ENCODE measurements at regions of chr2 and their contacts with region 1.

Region 1: GRCh38 chr2:20642055-20642971 is 8.6 kb downstream of the HS1BP3 start:
- DNase-seq: peak; percentile 50 to 91
- H3K4me3 ChIP-seq: no peak overlapping the region
- H3K27ac ChIP-seq: no peak overlapping the region
- H3K4me1 ChIP-seq: no peaks in the 10 kb centered on the region
- H3K27me3 ChIP-seq: no peaks in the 10 kb centered on the region
- CTCF ChIP-seq: peak in 2 of 3 experiments; percentile 95; a peak in 3 of 4 replicates
- EP300 ChIP-seq: no peak
- POLR2A ChIP-seq: no peak
- RAD21 ChIP-seq: peak; percentile 93 to 95

Region 2: GRCh38 chr2:20398956-20399567 is 243.3 kb before region 1 on chr2:
- CTCF ChIA-PET with region 1: interaction called, 14 read pairs
- POLR2A ChIA-PET with region 1: no interaction called
- DNase-seq: no peak
- H3K4me3 ChIP-seq: no peak overlapping the region
- H3K27ac ChIP-seq: no peak overlapping the region
- H3K4me1 ChIP-seq: no peaks in the 10 kb centered on the region
- H3K27me3 ChIP-seq: no peaks in the 10 kb centered on the region
- CTCF ChIP-seq: no peak
- EP300 ChIP-seq: no peak
- POLR2A ChIP-seq: no peak
- RAD21 ChIP-seq: no peak

Region 3: DNA sequence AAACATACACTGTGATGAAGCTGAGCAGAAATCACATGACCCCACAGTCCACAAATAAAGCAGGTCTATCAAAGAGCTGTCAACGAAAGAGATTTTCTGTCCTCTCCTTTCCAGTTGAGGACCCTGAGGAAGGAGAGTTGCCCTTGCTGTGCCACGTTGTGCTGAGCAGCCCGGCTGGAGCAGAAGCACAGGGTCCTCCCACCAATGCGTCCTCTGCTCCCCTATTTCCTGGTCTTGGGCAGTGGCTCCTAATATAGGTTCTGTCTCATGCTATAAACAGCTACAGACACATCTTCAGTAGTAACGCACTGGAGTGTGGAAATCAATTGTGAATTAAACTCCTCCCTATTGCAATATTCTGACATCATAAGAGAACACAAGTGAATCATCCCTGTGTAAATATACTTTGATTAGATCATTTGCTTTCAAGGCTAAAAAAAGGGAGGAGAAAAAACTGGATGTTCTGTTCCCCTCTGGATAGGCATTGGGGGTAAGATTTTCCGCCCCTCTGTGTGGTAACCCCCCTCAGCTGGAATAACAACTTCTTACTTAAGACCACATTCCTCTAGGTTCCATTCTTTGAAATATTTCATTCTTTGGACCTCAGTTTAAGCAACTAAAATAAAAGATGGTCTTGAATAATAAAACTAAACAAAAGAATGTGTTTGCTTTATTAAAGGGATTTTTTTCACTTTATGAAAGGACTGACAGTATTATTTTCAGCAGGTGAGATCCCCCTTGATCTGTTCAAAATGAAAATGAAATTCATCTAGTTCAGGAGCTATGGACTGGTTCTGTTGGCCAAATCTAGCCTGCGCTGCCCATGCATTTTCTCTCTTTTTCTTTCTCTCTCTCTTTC is 203.8 kb before region 1 on chr2:
- CTCF ChIA-PET with region 1: interaction called, 367 read pairs
- POLR2A ChIA-PET with region 1: interaction called, 4 read pairs
- DNase-seq: no peak
- H3K4me3 ChIP-seq: no peak overlapping the region
- H3K27ac ChIP-seq: no peak overlapping the region
- H3K4me1 ChIP-seq: no peaks in the 10 kb centered on the region
- H3K27me3 ChIP-seq: no peaks in the 10 kb centered on the region
- CTCF ChIP-seq: no peak
- EP300 ChIP-seq: no peak
- POLR2A ChIP-seq: no peak
- RAD21 ChIP-seq: no peak

Region 4: GRCh38 chr2:20532634-20533437 is 109.5 kb before region 1 on chr2:
- CTCF ChIA-PET with region 1: interaction called, 10 read pairs
- POLR2A ChIA-PET with region 1: no interaction called
- DNase-seq: no peak
- H3K4me3 ChIP-seq: no peak overlapping the region
- H3K27ac ChIP-seq: no peak overlapping the region
- H3K4me1 ChIP-seq: peaks cover 5 to 18% (median 12%) of the 10 kb centered on the region in 4 experiments
- H3K27me3 ChIP-seq: no peaks in the 10 kb centered on the region
- CTCF ChIP-seq: no peak
- EP300 ChIP-seq: no peak
- POLR2A ChIP-seq: no peak
- RAD21 ChIP-seq: peak in 1 of 2 experiments; percentile 12; a peak in 1 of 4 replicates

Region 5: GRCh38 chr2:20617892-20618467 is 24.3 kb before region 1 on chr2:
- CTCF ChIA-PET with region 1: interaction called, 47 read pairs
- POLR2A ChIA-PET with region 1: no interaction called
- DNase-seq: no peak
- H3K4me3 ChIP-seq: no peak overlapping the region
- H3K27ac ChIP-seq: no peak overlapping the region
- H3K4me1 ChIP-seq: peaks cover 0 to 20% (median 14%) of the 10 kb centered on the region in 4 experiments; a peak in 6 of 7 replicates
- H3K27me3 ChIP-seq: no peaks in the 10 kb centered on the region; a peak in 1 of 7 replicates
- CTCF ChIP-seq: peak in 2 of 3 experiments; percentile 7 to 24; a peak in 2 of 4 replicates
- EP300 ChIP-seq: no peak
- POLR2A ChIP-seq: no peak
- RAD21 ChIP-seq: peak in 1 of 2 experiments; percentile 16; a peak in 1 of 4 replicates

Region 6: GRCh38 chr2:21072477-21073242 is 430.3 kb after region 1 on chr2:
- CTCF ChIA-PET with region 1: no interaction called
- POLR2A ChIA-PET with region 1: no interaction called
- DNase-seq: no peak
- H3K4me3 ChIP-seq: no peak overlapping the region
- H3K27ac ChIP-seq: no peak overlapping the region
- H3K4me1 ChIP-seq: peaks cover 2 to 8% (median 4%) of the 10 kb centered on the region in 4 experiments; a peak in 6 of 7 replicates
- H3K27me3 ChIP-seq: no peaks in the 10 kb centered on the region
- CTCF ChIP-seq: peak in 1 of 3 experiments; percentile 27; a peak in 1 of 4 replicates
- EP300 ChIP-seq: no peak
- POLR2A ChIP-seq: no peak
- RAD21 ChIP-seq: no peak

Measured in H1 (cell line).